ENCODE measurements at regions of chr9 and their contacts with region 1.

Region 1: GRCh38 chr9:78035383-78035993 is 3.9 kb upstream of the GNAQ start:
- DNase-seq: peak; percentile 23 to 38
- ATAC-seq: peak; percentile 15 to 22
- H3K4me3 ChIP-seq: no peak overlapping the region
- H3K27ac ChIP-seq: peak overlapping the region; percentile 1 to 53 (median 36)
- H3K4me1 ChIP-seq: peaks cover 3 to 9% of the 10 kb centered on the region in 2 donors
- H3K27me3 ChIP-seq: no peaks in the 10 kb centered on the region
- CTCF ChIP-seq: peak; percentile 72 to 89 (median 74)
- POLR2A ChIP-seq: no peak

Region 2: GRCh38 chr9:77433675-77434445 is 601.6 kb before region 1 on chr9:
- in situ Hi-C with region 1: loop called in 1 of 4 experiments (anchors 25 kb)
- intact Hi-C with region 1: loop called (anchors 1 kb)
- DNase-seq: peak in 1 of 2 donors; percentile 33
- ATAC-seq: peak; percentile 52 to 70
- H3K4me3 ChIP-seq: no peak overlapping the region
- H3K27ac ChIP-seq: no peak overlapping the region
- H3K4me1 ChIP-seq: no peaks in the 10 kb centered on the region
- H3K27me3 ChIP-seq: no peaks in the 10 kb centered on the region
- CTCF ChIP-seq: peak; percentile 66 to 90 (median 81)
- POLR2A ChIP-seq: no peak

Region 3: GRCh38 chr9:77648234-77649120 is 387.0 kb before region 1 on chr9 and contains the start of gene GNA14:
- in situ Hi-C with region 1: no loop called
- intact Hi-C with region 1: loop called (anchors 10 kb)
- DNase-seq: no peak
- ATAC-seq: peak; percentile 51 to 65
- H3K4me3 ChIP-seq: peak within 1 kb of the TSS; percentile 43 to 58 (median 55)
- H3K27ac ChIP-seq: peak within 1 kb of the TSS in 3 of 4 donors; percentile 18 to 29 (median 24)
- H3K4me1 ChIP-seq: peaks cover 5 to 8% of the 10 kb centered on the region in 2 donors
- H3K27me3 ChIP-seq: peaks cover 16 to 26% (median 21%) of the 10 kb centered on the region in 3 donors
- CTCF ChIP-seq: no peak
- POLR2A ChIP-seq: no peak
- total RNA-seq, gene GNA14: 0.20 to 0.56 (median 0.22) TPM in 3 of 4 donors, not detected in the other

Region 4: GRCh38 chr9:77807281-77807683 is 228.2 kb before region 1 on chr9:
- in situ Hi-C with region 1: no loop called
- intact Hi-C with region 1: loop called (anchors 10 kb)
- DNase-seq: peak; percentile 28 to 37
- ATAC-seq: peak; percentile 93 to 96
- H3K4me3 ChIP-seq: no peak overlapping the region
- H3K27ac ChIP-seq: peak overlapping the region; percentile 62 to 76 (median 68)
- H3K4me1 ChIP-seq: peaks cover 17 to 30% of the 10 kb centered on the region in 2 donors
- H3K27me3 ChIP-seq: no peaks in the 10 kb centered on the region
- CTCF ChIP-seq: peak in 2 of 5 experiments; percentile 11 to 18
- POLR2A ChIP-seq: no peak

Region 5: GRCh38 chr9:77848897-77849296 is 186.6 kb before region 1 on chr9:
- in situ Hi-C with region 1: loop called in 1 of 4 experiments (anchors 25 kb)
- intact Hi-C with region 1: loop called (anchors 2 kb)
- DNase-seq: peak; percentile 79
- ATAC-seq: peak; percentile 96 to 97
- H3K4me3 ChIP-seq: no peak overlapping the region
- H3K27ac ChIP-seq: peak overlapping the region; percentile 52 to 76 (median 72)
- H3K4me1 ChIP-seq: peaks cover 15 to 23% of the 10 kb centered on the region in 2 donors
- H3K27me3 ChIP-seq: no peaks in the 10 kb centered on the region
- CTCF ChIP-seq: no peak
- POLR2A ChIP-seq: no peak

Region 6: DNA sequence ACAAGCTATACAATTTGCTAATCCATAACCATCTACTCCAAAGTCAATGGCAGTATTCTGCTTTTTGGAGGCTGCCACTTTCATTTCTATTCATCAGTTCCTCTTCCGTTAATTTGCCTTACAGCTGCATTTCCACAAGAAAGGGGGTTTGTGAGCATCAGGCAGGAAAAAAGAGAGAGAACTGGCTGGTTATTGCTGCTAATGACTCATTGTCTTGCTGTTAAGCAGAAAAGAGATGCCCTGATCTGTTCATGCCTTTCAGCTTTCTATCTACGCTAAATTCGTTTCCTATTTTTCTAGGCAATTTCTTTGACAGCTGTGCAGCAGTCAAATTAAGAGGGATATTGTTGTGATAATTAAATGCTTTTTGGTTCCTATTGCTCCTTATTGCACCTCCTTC is 62.1 kb after region 1 on chr9:
- in situ Hi-C with region 1: no loop called
- intact Hi-C with region 1: no loop called
- DNase-seq: no peak
- ATAC-seq: no peak
- H3K4me3 ChIP-seq: no peak overlapping the region
- H3K27ac ChIP-seq: no peak overlapping the region
- H3K4me1 ChIP-seq: no peaks in the 10 kb centered on the region
- H3K27me3 ChIP-seq: no peaks in the 10 kb centered on the region
- CTCF ChIP-seq: no peak
- POLR2A ChIP-seq: no peak

Measured in gastrocnemius medialis (tissue), 4 donors.